ENCODE measurements at regions of chr12 and their contacts with region 1.

Region 1: GRCh38 chr12:54431911-54432814 is 13.1 kb upstream of the ITGA5 start:
- DNase-seq: no peak
- H3K4me3 ChIP-seq: no peak overlapping the region
- H3K27me3 ChIP-seq: no peaks in the 10 kb centered on the region
- CTCF ChIP-seq: no peak

Region 2: DNA sequence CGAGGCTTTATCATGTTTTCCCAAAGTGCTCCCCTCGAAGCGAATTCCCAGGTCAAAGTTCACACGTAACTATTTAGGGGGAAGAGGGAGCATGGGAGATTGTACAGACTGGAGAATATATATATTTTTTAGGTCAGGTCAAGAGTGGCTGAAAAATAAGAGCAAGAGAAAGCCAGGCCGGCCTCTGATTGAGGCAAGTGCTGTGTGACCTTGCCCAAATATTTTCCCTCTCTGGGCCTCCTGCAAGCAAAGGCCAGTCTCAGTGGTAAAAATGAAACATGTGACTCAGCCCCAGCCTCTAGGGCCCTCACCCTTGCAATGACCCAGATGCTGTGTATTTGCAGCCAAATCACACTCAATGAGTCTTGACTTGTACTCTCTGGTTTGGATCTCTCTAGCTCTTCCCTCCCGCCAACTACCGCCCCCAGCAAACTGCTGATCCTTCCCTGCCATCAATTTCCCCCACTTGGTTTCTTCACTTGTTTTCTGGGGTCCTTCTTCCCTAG is 277.4 kb before region 1 on chr12:
- CTCF ChIA-PET with region 1: no interaction called
- POLR2A ChIA-PET with region 1: no interaction called
- DNase-seq: no peak
- H3K4me3 ChIP-seq: no peak overlapping the region
- H3K27me3 ChIP-seq: peaks cover 2% of the 10 kb centered on the region
- CTCF ChIP-seq: no peak

Region 3: GRCh38 chr12:54419088-54419892 is 12.9 kb before region 1 on chr12 and contains the start of gene ITGA5:
- CTCF ChIA-PET with region 1: interaction called, 10 read pairs
- POLR2A ChIA-PET with region 1: no interaction called
- DNase-seq: no peak
- H3K4me3 ChIP-seq: peak within 1 kb of the TSS; percentile 95
- H3K27me3 ChIP-seq: no peaks in the 10 kb centered on the region
- CTCF ChIP-seq: no peak
- polyA plus RNA-seq, gene ITGA5: 170 and 375 TPM in 2 replicates

Measured in BJ (cell line).